HCT116 (cell line): ENCODE measurements at regions of chr20 and their contacts with region 1.

Region 1: DNA sequence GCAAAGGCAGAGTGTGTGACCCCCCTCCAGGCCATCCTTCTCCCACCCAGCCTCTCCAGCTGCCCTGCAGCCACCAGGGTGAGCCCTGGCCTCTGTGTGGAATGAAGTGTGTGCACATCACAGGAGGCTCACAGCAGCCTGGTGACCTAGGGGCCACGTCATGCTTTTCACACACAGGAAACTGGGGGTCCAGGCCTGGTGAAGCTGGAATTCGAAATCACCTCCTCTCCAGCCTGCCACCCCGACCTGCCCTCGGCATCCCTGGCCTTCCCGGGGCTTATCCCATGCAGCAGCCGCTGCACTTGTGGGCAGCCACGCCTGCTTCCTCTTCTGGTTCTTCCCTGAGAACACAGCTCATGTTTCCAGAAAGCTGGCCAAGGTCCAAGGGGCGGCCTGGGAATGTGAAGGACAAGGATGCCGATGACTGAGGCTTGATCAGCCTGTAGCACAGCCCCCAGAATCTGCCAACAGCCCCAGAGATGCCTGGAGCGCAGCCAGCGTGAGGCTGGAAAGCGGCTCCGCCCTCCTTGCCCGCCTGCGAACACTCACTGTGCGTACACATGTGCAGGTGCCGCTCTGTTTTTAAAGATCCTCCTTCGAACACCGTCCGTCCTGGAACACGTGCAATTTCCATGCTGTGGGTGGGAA is 4.2 kb upstream of the NTSR1 start:
- DNase-seq: peak; percentile 91
- ATAC-seq: peak; percentile 26
- H3K4me3 ChIP-seq: peak overlapping the region; percentile 28 to 36
- H3K27ac ChIP-seq: peak overlapping the region; percentile 91
- H3K4me1 ChIP-seq: peaks cover 52 to 72% of the 10 kb centered on the region in 2 experiments
- H3K27me3 ChIP-seq: no peaks in the 10 kb centered on the region
- CTCF ChIP-seq: 0 out of 6 replicates have a peak, but pooled peaks of 1 of the 3 experiments have one; percentile 5
- POLR2A ChIP-seq: no peak
- RAD21 ChIP-seq: no peak

Region 2: DNA sequence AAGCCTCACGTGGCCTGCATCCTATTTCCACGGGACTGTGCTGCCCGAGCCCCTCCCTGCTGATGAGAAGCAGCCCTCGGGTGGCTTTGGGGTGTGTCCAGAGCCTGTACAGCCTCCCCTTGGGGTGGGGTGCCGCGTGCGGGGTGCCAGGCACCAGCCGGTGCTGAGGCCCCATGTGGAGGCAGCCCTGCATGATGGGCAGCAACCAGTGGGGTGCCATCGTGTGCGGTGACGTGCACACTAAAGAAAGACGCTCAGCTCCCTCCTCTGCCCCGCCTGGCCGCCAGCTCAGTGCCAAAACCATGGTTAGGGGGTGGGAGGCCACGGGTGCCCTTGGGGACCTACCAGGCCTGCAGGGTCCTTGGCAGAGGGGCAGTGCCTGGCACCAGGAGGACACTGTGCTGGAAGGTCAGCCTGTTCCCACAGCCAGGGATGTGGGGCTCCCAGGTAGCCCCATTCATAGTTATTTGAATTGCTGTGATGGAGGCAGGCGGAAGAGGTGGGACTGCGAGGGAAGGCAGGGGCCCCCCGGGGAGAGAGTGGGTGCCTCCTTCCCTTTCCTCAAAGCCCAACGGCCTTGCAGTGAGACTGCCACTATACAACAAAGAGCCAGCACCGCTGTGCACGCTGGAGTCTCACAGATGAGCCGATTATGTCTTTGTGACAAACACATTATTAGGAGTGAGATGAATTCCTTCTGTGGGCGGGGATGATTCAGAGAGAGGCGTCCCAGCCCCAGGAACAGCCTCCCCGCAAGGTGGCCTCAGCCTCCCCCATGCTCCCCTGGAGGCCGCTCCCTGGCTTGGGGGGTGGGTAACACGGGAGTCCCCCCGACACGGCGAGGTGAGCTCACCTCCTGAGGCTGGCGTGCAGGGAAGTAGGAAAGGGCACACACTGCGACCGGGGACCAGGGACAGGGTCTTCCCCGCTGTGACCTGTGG is 30.7 kb after region 1 on chr20:
- CTCF ChIA-PET with region 1: no interaction called
- POLR2A ChIA-PET with region 1: interaction called, 14 read pairs
- RAD21 ChIA-PET with region 1: interaction called, 6 to 7 read pairs
- intact Hi-C with region 1: loop called (anchors 2 kb)
- DNase-seq: peak; percentile 89
- ATAC-seq: peak; percentile 44
- H3K4me3 ChIP-seq: peak overlapping the region; percentile 38 to 43
- H3K27ac ChIP-seq: peak overlapping the region; percentile 100
- H3K4me1 ChIP-seq: peaks cover 86 to 100% of the 10 kb centered on the region in 2 experiments
- H3K27me3 ChIP-seq: no peaks in the 10 kb centered on the region
- CTCF ChIP-seq: peak in 2 of 3 experiments; percentile 19 to 21; a peak in 1 of 6 replicates
- POLR2A ChIP-seq: peak; percentile 51
- RAD21 ChIP-seq: no peak

Region 3: DNA sequence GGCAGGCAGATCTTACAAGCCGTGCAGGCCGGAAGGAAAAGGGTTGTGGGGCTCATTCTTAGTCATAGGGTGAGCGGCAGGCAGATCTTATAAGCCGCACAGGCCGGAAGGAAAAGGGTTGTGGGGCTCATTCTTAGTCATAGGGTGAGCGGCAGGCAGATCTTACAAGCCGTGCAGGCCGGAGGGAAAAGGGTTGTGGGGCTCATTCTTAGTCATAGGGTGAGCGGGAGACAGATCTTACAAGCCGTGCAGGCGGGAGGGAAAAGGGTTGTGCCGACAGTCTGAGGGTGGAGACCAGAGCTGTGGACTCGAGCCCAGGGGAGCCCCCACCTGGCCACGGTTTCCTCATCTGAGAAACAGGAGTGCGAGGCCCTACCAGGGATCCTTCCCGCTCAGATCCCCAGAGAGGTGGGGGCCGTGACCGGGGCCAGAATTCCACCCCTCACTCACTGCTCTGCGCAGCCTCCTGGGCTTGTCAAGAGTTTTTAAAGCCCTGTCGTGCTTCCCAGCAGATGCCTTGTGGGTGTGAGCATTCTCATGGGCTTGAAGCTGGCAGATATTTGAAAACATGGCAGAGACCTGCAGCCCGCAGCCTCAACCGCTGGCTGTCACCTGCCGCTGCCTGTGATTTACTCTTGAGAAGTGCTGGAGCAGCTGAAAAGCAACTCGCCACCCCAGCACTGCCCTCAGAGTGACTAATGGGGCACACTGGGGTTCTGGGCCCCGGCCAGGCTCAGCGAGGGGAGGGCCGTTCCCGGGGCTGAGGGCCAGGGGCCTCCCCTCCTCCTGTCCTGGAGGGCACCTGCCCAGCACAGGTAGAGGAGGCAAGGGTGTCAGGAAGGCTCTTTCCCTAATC is 36.1 kb after region 1 on chr20:
- CTCF ChIA-PET with region 1: no interaction called
- POLR2A ChIA-PET with region 1: interaction called, 14 read pairs
- RAD21 ChIA-PET with region 1: interaction called, 6 to 7 read pairs
- intact Hi-C with region 1: loop called (anchors 2 kb)
- DNase-seq: peak; percentile 97
- ATAC-seq: peak; percentile 65
- H3K4me3 ChIP-seq: peak overlapping the region; percentile 26 to 37; a peak in 2 of 4 replicates
- H3K27ac ChIP-seq: peak overlapping the region; percentile 100
- H3K4me1 ChIP-seq: peaks cover 65 to 94% of the 10 kb centered on the region in 2 experiments
- H3K27me3 ChIP-seq: no peaks in the 10 kb centered on the region
- CTCF ChIP-seq: 0 out of 6 replicates have a peak, but pooled peaks of 1 of the 3 experiments have one; percentile 2
- POLR2A ChIP-seq: no peak
- RAD21 ChIP-seq: no peak

Region 4: GRCh38 chr20:62838455-62838891 is 134.0 kb after region 1 on chr20:
- CTCF ChIA-PET with region 1: no interaction called
- POLR2A ChIA-PET with region 1: no interaction called
- RAD21 ChIA-PET with region 1: no interaction called
- intact Hi-C with region 1: no loop called
- DNase-seq: no peak
- ATAC-seq: no peak
- H3K4me3 ChIP-seq: no peak overlapping the region
- H3K27ac ChIP-seq: no peak overlapping the region
- H3K4me1 ChIP-seq: peaks cover 0 to 2% of the 10 kb centered on the region in 2 experiments; a peak in 1 of 4 replicates
- H3K27me3 ChIP-seq: no peaks in the 10 kb centered on the region
- CTCF ChIP-seq: no peak
- POLR2A ChIP-seq: no peak
- RAD21 ChIP-seq: no peak